ENCODE measurements at regions of chr4 and their contacts with region 1.

Region 1: GRCh38 chr4:185597532-185598188 is 62.4 kb upstream of the PDLIM3 start:
- DNase-seq: no peak
- H3K4me3 ChIP-seq: no peak overlapping the region
- H3K27ac ChIP-seq: peak overlapping the region; percentile 17
- H3K4me1 ChIP-seq: no peaks in the 10 kb centered on the region
- H3K27me3 ChIP-seq: no peaks in the 10 kb centered on the region
- CTCF ChIP-seq: peak; percentile 93 to 98 (median 97)
- POLR2A ChIP-seq: no peak

Region 2: DNA sequence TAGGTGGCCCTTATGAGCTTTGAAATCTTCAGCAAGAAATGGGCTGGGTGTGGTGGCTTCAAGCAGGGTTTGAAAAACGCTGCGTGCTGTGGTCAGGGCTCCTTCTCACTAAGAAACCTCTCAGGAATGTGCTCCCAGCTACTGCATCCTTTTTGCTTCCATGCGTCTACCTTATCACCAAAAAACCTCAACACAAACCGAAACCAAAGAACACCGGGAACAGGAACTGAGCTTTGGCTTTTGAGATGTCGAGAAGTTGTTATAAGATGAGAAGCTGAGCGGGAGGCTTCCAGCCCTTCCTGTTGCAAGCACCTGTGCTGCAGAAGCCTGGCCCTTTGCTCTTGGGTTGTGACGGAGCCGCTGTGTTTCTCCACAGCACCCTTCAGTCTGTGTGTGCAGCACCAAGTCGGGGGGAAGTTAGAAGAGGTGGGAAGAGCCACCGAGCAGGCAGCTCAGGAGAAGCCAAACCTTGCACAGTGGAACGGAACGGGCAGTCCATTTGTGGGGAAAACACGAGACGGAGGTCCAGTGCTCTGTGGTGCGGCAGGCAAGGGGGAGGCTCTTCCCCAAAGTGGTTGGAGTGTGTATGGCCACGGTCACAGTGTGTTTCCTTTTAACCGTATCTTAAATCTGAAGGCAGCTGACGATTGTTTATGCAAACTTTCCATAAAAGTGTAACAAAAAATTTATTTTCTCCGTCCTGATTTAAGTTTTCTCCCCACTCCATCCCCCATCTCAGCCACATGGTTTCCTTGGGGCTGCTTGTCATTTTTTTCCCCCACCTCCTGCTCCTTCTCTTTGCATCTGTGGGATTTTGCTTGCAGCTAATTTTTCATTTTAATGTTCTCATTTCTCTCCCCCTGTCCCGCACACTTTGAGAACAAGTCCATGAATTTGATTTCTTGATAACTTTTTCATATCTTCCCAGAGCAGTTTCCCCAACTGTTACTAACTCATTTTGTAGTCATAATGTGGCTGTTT is 1569.0 kb before region 1 on chr4:
- intact Hi-C with region 1: no loop called
- DNase-seq: no peak
- H3K4me3 ChIP-seq: peak overlapping the region in 1 of 2 donors; percentile 27
- H3K27ac ChIP-seq: no peak overlapping the region
- H3K4me1 ChIP-seq: no peaks in the 10 kb centered on the region
- H3K27me3 ChIP-seq: no peaks in the 10 kb centered on the region
- CTCF ChIP-seq: no peak
- POLR2A ChIP-seq: no peak

Region 3: GRCh38 chr4:185471235-185472102 is 126.2 kb before region 1 on chr4 and contains the start of gene CCDC110:
- intact Hi-C with region 1: loop called (anchors 5 kb)
- DNase-seq: peak in 1 of 2 donors; percentile 95
- H3K4me3 ChIP-seq: peak within 1 kb of the TSS; percentile 78 to 90
- H3K27ac ChIP-seq: peak within 1 kb of the TSS; percentile 85
- H3K4me1 ChIP-seq: peaks cover 10% of the 10 kb centered on the region
- H3K27me3 ChIP-seq: no peaks in the 10 kb centered on the region
- CTCF ChIP-seq: peak; percentile 5 to 77 (median 61)
- POLR2A ChIP-seq: peak in 1 of 2 donors; percentile 19
- total RNA-seq, gene CCDC110: 1.2 TPM

Region 4: GRCh38 chr4:185534866-185535611 is 62.6 kb before region 1 on chr4 and contains the start of gene PDLIM3:
- intact Hi-C with region 1: loop called (anchors 10 kb)
- DNase-seq: no peak
- H3K4me3 ChIP-seq: peak within 1 kb of the TSS; percentile 53 to 82
- H3K27ac ChIP-seq: peak within 1 kb of the TSS; percentile 65
- H3K4me1 ChIP-seq: peaks cover 15% of the 10 kb centered on the region
- H3K27me3 ChIP-seq: no peaks in the 10 kb centered on the region
- CTCF ChIP-seq: no peak
- POLR2A ChIP-seq: no peak
- total RNA-seq, gene PDLIM3: 148 TPM